Heart left ventricle (tissue), 16 donors: ENCODE measurements at regions of chr15 and their contacts with region 1.

Region 1: GRCh38 chr15:82197733-82198594 is 64.6 kb downstream of the EFL1 start:
- DNase-seq: peak in 4 of 5 donors; percentile 64 to 71 (median 67)
- ATAC-seq: peak; percentile 44 to 90 (median 82)
- H3K4me3 ChIP-seq: no peak overlapping the region
- H3K27ac ChIP-seq: no peak overlapping the region
- H3K4me1 ChIP-seq: peaks cover 0 to 23% (median 7%) of the 10 kb centered on the region in 12 donors
- H3K27me3 ChIP-seq: no peaks in the 10 kb centered on the region
- CTCF ChIP-seq: peak; percentile 61 to 84 (median 78)
- POLR2A ChIP-seq: no peak

Region 2: GRCh38 chr15:81274931-81275707 is 922.8 kb before region 1 on chr15:
- intact Hi-C with region 1: loop called in 1 of 10 experiments (anchors 10 kb)
- DNase-seq: peak; percentile 74 to 83 (median 78)
- ATAC-seq: peak; percentile 62 to 94 (median 88)
- H3K4me3 ChIP-seq: no peak overlapping the region
- H3K27ac ChIP-seq: peak overlapping the region in 10 of 12 donors; percentile 12 to 70 (median 48)
- H3K4me1 ChIP-seq: peaks cover 0 to 16% (median 4%) of the 10 kb centered on the region in 12 donors
- H3K27me3 ChIP-seq: peaks cover 0 to 3% (median 0%) of the 10 kb centered on the region in 9 donors
- CTCF ChIP-seq: peak; percentile 65 to 90 (median 78)
- POLR2A ChIP-seq: no peak

Region 3: DNA sequence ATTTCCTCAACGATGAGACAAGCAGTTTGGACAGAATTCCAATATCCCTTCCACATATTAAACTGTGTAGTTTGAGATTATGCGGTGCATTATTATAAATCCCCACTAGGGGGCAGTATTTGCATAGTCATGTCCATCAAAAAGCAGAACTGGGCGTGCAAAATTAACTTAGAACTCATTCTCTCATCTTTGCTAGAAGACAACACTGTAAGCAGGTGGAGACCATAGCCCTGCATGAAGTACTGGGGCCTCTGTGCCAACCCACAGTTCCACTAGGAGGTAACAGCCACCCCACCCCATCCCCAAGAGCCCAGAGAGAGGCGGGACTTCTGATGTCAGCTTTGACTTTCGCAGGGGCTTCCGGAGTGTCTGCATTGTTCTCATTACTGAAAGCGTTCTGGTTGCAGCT is 717.3 kb before region 1 on chr15:
- intact Hi-C with region 1: loop called in 9 of 10 experiments (anchors 2 to 10 kb)
- DNase-seq: peak in 3 of 5 donors; percentile 23 to 32 (median 26)
- ATAC-seq: peak; percentile 42 to 65 (median 62)
- H3K4me3 ChIP-seq: peak overlapping the region in 1 of 12 donors; percentile 7
- H3K27ac ChIP-seq: no peak overlapping the region
- H3K4me1 ChIP-seq: no peaks in the 10 kb centered on the region
- H3K27me3 ChIP-seq: no peaks in the 10 kb centered on the region
- CTCF ChIP-seq: peak; percentile 79 to 99 (median 87)
- POLR2A ChIP-seq: no peak

Region 4: DNA sequence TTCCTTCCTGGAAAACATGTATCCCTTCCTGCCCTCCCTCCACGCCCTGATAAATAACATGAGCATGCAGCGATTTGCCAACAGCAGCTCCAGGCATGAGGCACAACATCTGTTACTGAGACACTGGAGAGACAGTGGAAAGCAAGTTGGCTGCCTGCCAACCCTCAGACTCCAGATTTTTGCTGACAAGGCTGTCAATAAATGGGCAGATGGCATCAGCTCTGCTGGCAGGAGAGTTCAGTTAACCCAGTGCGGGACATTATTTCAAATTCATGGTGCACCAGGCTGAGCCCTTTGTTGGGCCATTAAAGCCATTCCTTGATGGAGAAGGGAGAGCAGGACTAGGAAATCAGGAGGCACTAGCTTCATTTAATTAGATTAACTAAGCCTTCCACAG is 445.4 kb before region 1 on chr15:
- intact Hi-C with region 1: loop called in 1 of 10 experiments (anchors 10 kb)
- DNase-seq: peak in 4 of 5 donors; percentile 24 to 80 (median 40)
- ATAC-seq: peak; percentile 60 to 76 (median 70)
- H3K4me3 ChIP-seq: no peak overlapping the region
- H3K27ac ChIP-seq: no peak overlapping the region
- H3K4me1 ChIP-seq: peaks cover 0 to 34% (median 18%) of the 10 kb centered on the region in 12 donors
- H3K27me3 ChIP-seq: peaks cover 0 to 5% (median 0%) of the 10 kb centered on the region in 9 donors
- CTCF ChIP-seq: no peak
- POLR2A ChIP-seq: no peak

Region 5: DNA sequence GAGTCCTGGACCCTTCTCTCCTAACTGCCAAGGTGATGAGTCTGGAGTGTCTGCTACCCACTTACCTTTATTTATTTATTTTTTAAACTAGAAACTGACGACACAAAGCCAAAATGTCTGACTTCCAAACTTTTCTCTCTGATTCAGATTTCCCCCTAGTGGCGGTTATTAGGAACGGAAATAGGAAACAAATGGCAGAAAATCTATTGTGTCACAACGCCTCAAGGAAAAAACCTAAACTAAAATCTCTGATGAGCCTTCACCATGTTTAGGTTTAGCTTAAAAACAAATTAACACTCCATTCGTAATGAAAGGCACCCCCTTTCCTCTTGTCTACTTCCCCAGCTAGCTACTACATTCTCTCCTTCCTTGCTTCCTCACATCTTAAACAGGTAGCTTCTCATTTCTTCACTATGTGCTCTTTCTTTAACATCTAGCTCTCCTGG is 58.1 kb before region 1 on chr15:
- intact Hi-C with region 1: loop called in 1 of 10 experiments (anchors 5 kb)
- DNase-seq: no peak
- ATAC-seq: no peak
- H3K4me3 ChIP-seq: no peak overlapping the region
- H3K27ac ChIP-seq: no peak overlapping the region
- H3K4me1 ChIP-seq: peaks cover 0 to 11% (median 0%) of the 10 kb centered on the region in 12 donors
- H3K27me3 ChIP-seq: no peaks in the 10 kb centered on the region
- CTCF ChIP-seq: peak; percentile 54 to 79 (median 70)
- POLR2A ChIP-seq: no peak